ENCODE measurements at regions of chr11 and their contacts with region 1.

Region 1: GRCh38 chr11:59135648-59136461 is 6.8 kb upstream of the FAM111A start:
- DNase-seq: peak; percentile 92
- ATAC-seq: peak; percentile 99
- H3K4me3 Mint-ChIP-seq: peak overlapping the region; percentile 3
- H3K27ac Mint-ChIP-seq: peak overlapping the region; percentile 71
- H3K4me1 Mint-ChIP-seq: peaks cover 22% of the 10 kb centered on the region
- H3K27me3 Mint-ChIP-seq: no peaks in the 10 kb centered on the region

Region 2: GRCh38 chr11:59053387-59053786 is 82.5 kb before region 1 on chr11:
- CTCF ChIA-PET with region 1: interaction called, 23 read pairs
- DNase-seq: peak; percentile 81
- ATAC-seq: peak; percentile 71
- H3K4me3 Mint-ChIP-seq: no peak overlapping the region
- H3K27ac Mint-ChIP-seq: no peak overlapping the region
- H3K4me1 Mint-ChIP-seq: peaks cover 4% of the 10 kb centered on the region
- H3K27me3 Mint-ChIP-seq: peaks cover 36% of the 10 kb centered on the region

Region 3: DNA sequence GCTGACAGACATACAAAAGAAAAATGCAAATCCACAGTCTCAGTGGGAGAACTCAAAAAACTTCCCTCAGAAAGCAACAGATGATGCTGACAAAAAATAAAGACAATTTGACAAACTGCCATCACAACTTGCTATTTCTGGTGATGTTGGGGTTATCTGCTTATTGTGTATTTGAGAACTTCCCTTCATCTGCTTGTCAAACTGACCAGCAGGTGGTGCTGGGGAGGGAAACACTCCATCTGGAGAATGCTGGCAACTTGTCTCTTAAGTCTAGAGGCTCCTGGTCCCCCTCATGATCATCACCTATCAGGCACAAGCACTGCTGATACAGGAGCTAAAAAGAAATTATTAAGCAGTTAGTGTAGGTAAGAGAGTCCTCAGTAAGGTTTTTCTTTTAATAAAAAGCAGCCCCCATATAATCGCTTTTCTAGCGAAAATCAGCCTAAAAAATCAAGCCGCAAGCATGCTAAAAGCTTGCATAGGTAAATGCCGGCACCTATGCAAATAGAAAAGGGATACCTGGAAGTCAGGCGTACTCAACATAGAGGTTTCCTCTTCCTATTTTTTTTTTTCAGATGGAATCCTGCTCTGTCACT is 38.6 kb before region 1 on chr11:
- CTCF ChIA-PET with region 1: interaction called, 17 read pairs
- DNase-seq: peak; percentile 78
- ATAC-seq: peak; percentile 75
- H3K4me3 Mint-ChIP-seq: no peak overlapping the region
- H3K27ac Mint-ChIP-seq: no peak overlapping the region
- H3K4me1 Mint-ChIP-seq: peaks cover 8% of the 10 kb centered on the region
- H3K27me3 Mint-ChIP-seq: peaks cover 39% of the 10 kb centered on the region

Region 4: GRCh38 chr11:59106363-59107336 is 29.2 kb before region 1 on chr11 and contains the start of gene FAM111B:
- CTCF ChIA-PET with region 1: interaction called, 42 read pairs
- DNase-seq: peak; percentile 89
- ATAC-seq: peak; percentile 93
- H3K4me3 Mint-ChIP-seq: peak within 1 kb of the TSS; percentile 81
- H3K27ac Mint-ChIP-seq: peak within 1 kb of the TSS; percentile 80
- H3K4me1 Mint-ChIP-seq: peaks cover 66% of the 10 kb centered on the region
- H3K27me3 Mint-ChIP-seq: peaks cover 6% of the 10 kb centered on the region
- total RNA-seq, gene FAM111B: 42.7 to 46.5 TPM

Region 5: GRCh38 chr11:59197991-59198390 is 62.1 kb after region 1 on chr11:
- CTCF ChIA-PET with region 1: no interaction called
- DNase-seq: no peak
- ATAC-seq: no peak
- H3K4me3 Mint-ChIP-seq: no peak overlapping the region
- H3K27ac Mint-ChIP-seq: no peak overlapping the region
- H3K4me1 Mint-ChIP-seq: peaks cover 5% of the 10 kb centered on the region
- H3K27me3 Mint-ChIP-seq: peaks cover under 1% of the 10 kb centered on the region

Region 6: DNA sequence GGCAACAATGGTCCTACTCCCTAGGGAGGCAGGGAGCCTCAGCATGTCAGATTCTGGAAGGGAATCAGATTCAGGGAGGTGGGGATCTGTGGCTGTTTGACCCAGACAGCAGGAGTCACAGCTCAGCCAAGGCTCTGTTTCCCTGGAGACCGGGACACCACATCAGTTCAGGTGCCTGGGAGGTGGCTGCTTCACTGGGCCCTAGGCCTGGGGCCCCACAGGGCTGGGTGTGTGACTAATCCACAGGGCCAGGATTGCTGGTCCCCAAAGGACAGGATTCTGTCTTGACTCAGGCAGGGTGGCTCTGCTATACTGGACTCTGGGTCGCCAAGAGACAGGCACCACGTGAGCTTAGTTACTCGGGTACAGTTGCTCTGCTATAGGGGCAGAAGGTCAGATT is 219.4 kb after region 1 on chr11:
- CTCF ChIA-PET with region 1: no interaction called
- DNase-seq: no peak
- ATAC-seq: no peak
- H3K4me3 Mint-ChIP-seq: no peak overlapping the region
- H3K27ac Mint-ChIP-seq: no peak overlapping the region
- H3K4me1 Mint-ChIP-seq: no peaks in the 10 kb centered on the region
- H3K27me3 Mint-ChIP-seq: no peaks in the 10 kb centered on the region